ENCODE measurements at regions of chr10 and their contacts with region 1.

Region 1: GRCh38 chr10:116796910-116797513 is 52.3 kb upstream of the ENO4 start:
- DNase-seq: peak; percentile 61 to 89 (median 80)
- H3K4me3 ChIP-seq: no peak overlapping the region
- H3K27ac ChIP-seq: no peak overlapping the region
- H3K4me1 ChIP-seq: no peaks in the 10 kb centered on the region
- H3K27me3 ChIP-seq: peaks cover 5% of the 10 kb centered on the region
- CTCF ChIP-seq: peak; percentile 87 to 95 (median 92)
- POLR2A ChIP-seq: no peak

Region 2: GRCh38 chr10:117167789-117168674 is 371.0 kb after region 1 on chr10:
- intact Hi-C with region 1: loop called (anchors 2 to 5 kb)
- DNase-seq: peak; percentile 42 to 72 (median 60)
- H3K4me3 ChIP-seq: peak overlapping the region in 1 of 4 donors; percentile 37
- H3K27ac ChIP-seq: no peak overlapping the region
- H3K4me1 ChIP-seq: peaks cover 12 to 34% of the 10 kb centered on the region in 2 donors
- H3K27me3 ChIP-seq: peaks cover 99% of the 10 kb centered on the region
- CTCF ChIP-seq: peak; percentile 61 to 89 (median 82)
- POLR2A ChIP-seq: no peak

Measured in adrenal gland (tissue), 19 donors.